ENCODE measurements at regions of chr4 and their contacts with region 1.

Region 1: DNA sequence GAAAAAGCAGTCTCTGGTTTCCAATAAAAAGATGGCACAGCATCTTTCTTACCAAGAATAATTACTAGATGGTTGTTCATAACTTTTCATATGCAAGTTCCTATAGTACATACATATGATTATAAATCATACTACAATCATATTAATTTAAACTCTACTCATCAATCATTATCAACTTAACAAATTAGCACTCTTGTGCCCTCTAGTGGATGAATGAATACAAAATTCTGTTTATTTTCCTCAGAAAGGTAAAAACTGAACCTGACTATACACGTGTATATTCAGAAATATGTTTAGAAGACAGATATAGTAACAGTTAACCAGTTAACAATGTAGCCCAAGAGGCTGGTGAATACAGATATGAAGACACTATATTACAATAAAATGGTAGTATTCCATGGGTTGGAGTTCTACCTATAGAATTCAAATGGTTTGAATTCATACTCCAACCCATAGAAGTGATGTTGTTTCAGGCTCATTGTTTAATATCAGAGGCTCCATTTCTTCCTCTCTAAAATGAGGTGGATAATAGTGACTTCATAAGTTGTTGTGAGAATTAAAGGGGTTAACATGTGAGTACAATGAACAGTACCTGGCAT is 100.0 kb downstream of the ADAMTS3 start:
- DNase-seq: peak in 3 of 4 experiments; percentile 9 to 40 (median 10)
- ATAC-seq: no peak
- H3K4me3 ChIP-seq: no peak overlapping the region
- H3K27ac ChIP-seq: no peak overlapping the region
- H3K4me1 ChIP-seq: peaks cover 0 to 14% of the 10 kb centered on the region in 2 experiments; a peak in 2 of 5 replicates
- H3K27me3 ChIP-seq: no peaks in the 10 kb centered on the region
- CTCF ChIP-seq: peak in 2 of 3 experiments; percentile 29 to 53; a peak in 3 of 6 replicates
- EP300 ChIP-seq: no peak
- POLR2A ChIP-seq: no peak
- RAD21 ChIP-seq: peak; percentile 29 to 58; a peak in 3 of 4 replicates

Region 2: GRCh38 chr4:71377561-71377960 is 1091.4 kb before region 1 on chr4:
- CTCF ChIA-PET with region 1: no interaction called
- POLR2A ChIA-PET with region 1: no interaction called
- in situ Hi-C with region 1: no loop called
- intact Hi-C with region 1: no loop called
- DNase-seq: no peak
- ATAC-seq: no peak
- H3K4me3 ChIP-seq: no peak overlapping the region
- H3K27ac ChIP-seq: no peak overlapping the region
- H3K4me1 ChIP-seq: no peaks in the 10 kb centered on the region
- H3K27me3 ChIP-seq: no peaks in the 10 kb centered on the region
- CTCF ChIP-seq: no peak
- EP300 ChIP-seq: no peak
- POLR2A ChIP-seq: no peak
- RAD21 ChIP-seq: no peak

Region 3: DNA sequence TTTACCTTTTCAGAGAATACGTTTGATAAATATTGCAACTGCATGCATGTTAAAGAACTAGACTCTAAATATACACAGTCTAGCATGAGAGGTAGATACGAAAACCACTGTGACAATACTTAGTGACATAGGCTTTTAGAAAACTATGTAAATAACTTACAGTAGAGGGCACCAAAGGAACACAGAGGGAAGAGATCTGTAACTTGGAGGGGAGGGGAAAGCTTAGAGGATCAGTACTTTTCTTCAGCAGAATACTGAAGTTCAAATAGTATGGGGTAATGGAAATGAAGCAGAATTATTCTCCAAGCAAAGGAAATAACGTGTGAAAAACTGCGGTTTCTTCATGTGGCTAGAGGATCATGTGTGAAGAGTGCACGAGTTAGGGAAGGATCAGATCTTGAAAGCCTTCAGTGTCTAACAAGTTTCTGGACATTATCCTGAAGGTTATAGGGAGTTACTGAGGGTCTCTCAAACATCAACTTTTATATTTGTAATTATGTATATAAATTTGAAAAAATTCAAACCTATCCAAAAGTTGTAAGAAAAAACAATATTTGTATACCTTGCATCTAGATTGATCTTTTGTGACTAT is 172.9 kb before region 1 on chr4:
- CTCF ChIA-PET with region 1: no interaction called
- POLR2A ChIA-PET with region 1: no interaction called
- in situ Hi-C with region 1: no loop called
- intact Hi-C with region 1: loop called (anchors 1 kb)
- DNase-seq: peak; percentile 34 to 46 (median 40)
- ATAC-seq: peak; percentile 93
- H3K4me3 ChIP-seq: no peak overlapping the region
- H3K27ac ChIP-seq: no peak overlapping the region
- H3K4me1 ChIP-seq: no peaks in the 10 kb centered on the region
- H3K27me3 ChIP-seq: no peaks in the 10 kb centered on the region
- CTCF ChIP-seq: peak; percentile 42 to 69 (median 55); a peak in 5 of 6 replicates
- EP300 ChIP-seq: no peak
- POLR2A ChIP-seq: no peak
- RAD21 ChIP-seq: peak; percentile 66 to 70

Region 4: DNA sequence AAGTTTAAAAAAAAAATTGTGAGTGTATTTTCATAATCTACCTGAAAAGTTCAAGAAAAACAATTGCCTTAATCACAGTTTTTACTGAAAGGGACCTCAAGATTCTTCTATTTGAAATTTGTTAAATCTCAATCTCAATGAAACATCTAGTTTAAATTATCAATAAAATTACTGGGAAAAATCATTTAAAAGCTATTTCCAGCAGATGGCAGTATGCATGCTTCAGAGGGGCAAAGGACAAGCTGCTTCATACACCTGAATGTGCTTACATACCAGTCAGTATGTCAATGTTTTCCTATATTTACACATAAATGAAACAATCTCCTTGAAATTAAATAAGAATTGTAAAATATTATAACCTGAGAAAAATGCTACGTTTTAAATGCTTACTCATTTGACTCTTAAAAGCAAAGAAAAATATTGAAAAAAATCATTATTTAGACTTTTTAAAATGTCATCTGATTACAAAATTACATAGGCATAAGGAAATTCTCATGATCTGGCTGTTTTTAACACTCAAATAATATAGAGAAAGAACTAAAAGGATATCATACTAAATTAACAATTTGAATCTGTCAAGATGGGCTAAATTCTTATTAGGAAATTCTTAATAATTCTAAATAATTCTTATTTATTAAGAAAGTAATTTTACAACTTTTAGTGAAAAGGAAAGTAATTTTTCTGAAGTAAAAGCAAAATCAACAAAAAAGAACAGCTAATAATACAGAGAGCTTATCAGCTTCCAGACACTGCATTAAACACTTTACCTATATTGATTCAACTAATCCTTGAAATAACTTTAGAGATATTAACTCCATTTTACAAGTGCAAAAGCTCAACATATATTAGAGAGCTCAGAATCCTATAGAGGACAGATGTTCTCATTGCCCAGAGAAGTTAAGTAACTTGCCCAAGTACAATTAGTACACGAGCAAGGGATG is 142.0 kb before region 1 on chr4:
- CTCF ChIA-PET with region 1: interaction called, 16 read pairs
- POLR2A ChIA-PET with region 1: no interaction called
- in situ Hi-C with region 1: no loop called
- intact Hi-C with region 1: loop called (anchors 5 kb)
- DNase-seq: peak in 2 of 4 experiments; percentile 29 to 43
- ATAC-seq: peak; percentile 57; the same call in 2 of the 3 replicates
- H3K4me3 ChIP-seq: no peak overlapping the region
- H3K27ac ChIP-seq: no peak overlapping the region
- H3K4me1 ChIP-seq: no peaks in the 10 kb centered on the region
- H3K27me3 ChIP-seq: no peaks in the 10 kb centered on the region
- CTCF ChIP-seq: peak; percentile 50 to 70 (median 53); a peak in 4 of 6 replicates
- EP300 ChIP-seq: no peak
- POLR2A ChIP-seq: no peak
- RAD21 ChIP-seq: peak; percentile 69 to 73

Region 5: GRCh38 chr4:72513227-72513626 is 44.2 kb after region 1 on chr4:
- CTCF ChIA-PET with region 1: no interaction called
- POLR2A ChIA-PET with region 1: no interaction called
- in situ Hi-C with region 1: no loop called
- intact Hi-C with region 1: no loop called
- DNase-seq: peak in 2 of 4 experiments; percentile 15 to 19
- ATAC-seq: peak; percentile 81
- H3K4me3 ChIP-seq: no peak overlapping the region
- H3K27ac ChIP-seq: peak overlapping the region; percentile 52; the same call in 1 of the 3 replicates
- H3K4me1 ChIP-seq: no peaks in the 10 kb centered on the region
- H3K27me3 ChIP-seq: no peaks in the 10 kb centered on the region
- CTCF ChIP-seq: no peak
- EP300 ChIP-seq: peak; percentile 9; the same call in 1 of the 2 replicates
- POLR2A ChIP-seq: no peak
- RAD21 ChIP-seq: no peak

Region 6: GRCh38 chr4:72613959-72614358 is 145.0 kb after region 1 on chr4:
- CTCF ChIA-PET with region 1: no interaction called
- POLR2A ChIA-PET with region 1: no interaction called
- in situ Hi-C with region 1: no loop called
- intact Hi-C with region 1: no loop called
- DNase-seq: peak in 1 of 4 experiments; percentile 44
- ATAC-seq: peak; percentile 76
- H3K4me3 ChIP-seq: no peak overlapping the region
- H3K27ac ChIP-seq: no peak overlapping the region
- H3K4me1 ChIP-seq: 0 out of 5 replicates have a peak, but pooled peaks cover 0 to 2% of the 10 kb centered on the region in 2 experiments
- H3K27me3 ChIP-seq: no peaks in the 10 kb centered on the region
- CTCF ChIP-seq: no peak
- EP300 ChIP-seq: no peak
- POLR2A ChIP-seq: no peak
- RAD21 ChIP-seq: no peak